MCF 10A (cell line): ENCODE measurements at regions of chr7 and their contacts with region 1.

Region 1: GRCh38 chr7:29189743-29190201 is 4.8 kb upstream of the CHN2 start:
- DNase-seq: peak; percentile 60
- H3K4me3 Mint-ChIP-seq: no peak overlapping the region
- H3K27ac Mint-ChIP-seq: no peak overlapping the region
- H3K4me1 Mint-ChIP-seq: no peaks in the 10 kb centered on the region
- H3K27me3 Mint-ChIP-seq: no peaks in the 10 kb centered on the region
- CTCF ChIP-seq: peak; percentile 87

Region 2: DNA sequence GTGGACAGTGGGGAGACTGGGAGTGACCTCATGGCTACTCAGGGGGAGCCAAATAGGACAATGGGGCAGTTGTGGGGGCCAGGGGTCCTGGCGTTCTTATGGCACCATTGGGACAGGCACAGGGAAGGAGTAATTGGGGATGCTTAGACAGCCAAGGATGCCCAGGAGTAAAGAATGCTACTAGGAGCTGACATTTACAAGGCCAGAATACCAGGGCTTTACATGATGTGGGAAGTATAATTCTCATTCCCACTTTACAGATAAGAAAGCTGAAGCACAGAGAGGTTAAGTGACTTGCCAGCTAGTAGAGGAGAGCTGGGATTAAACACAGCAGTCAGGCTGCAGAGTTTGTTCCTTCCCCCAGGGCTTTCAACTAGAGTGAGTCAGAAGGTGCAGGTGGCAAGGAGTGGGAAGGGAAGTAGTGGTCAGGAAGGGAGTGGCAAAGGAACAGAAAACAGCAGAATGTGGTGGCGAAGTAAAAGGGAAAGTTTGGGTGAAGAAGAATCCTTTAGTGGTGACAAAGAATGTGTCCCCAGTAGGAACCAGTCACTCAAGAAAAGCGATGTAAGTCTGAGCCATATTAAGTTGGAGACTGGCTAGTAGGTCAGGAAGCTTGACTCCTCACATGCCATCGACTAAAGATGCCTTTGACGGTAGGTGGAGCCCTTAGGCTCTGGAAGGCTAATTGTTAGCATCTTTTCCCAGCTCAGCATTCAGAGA is 76.2 kb before region 1 on chr7:
- CTCF ChIA-PET with region 1: interaction called, 19 read pairs
- POLR2A ChIA-PET with region 1: interaction called, 7 read pairs
- intact Hi-C with region 1: loop called (anchors 5 kb)
- DNase-seq: peak; percentile 82
- H3K4me3 Mint-ChIP-seq: peak overlapping the region; percentile 68
- H3K27ac Mint-ChIP-seq: peak overlapping the region; percentile 84
- H3K4me1 Mint-ChIP-seq: peaks cover 51% of the 10 kb centered on the region
- H3K27me3 Mint-ChIP-seq: no peaks in the 10 kb centered on the region
- CTCF ChIP-seq: peak; percentile 40

Region 3: DNA sequence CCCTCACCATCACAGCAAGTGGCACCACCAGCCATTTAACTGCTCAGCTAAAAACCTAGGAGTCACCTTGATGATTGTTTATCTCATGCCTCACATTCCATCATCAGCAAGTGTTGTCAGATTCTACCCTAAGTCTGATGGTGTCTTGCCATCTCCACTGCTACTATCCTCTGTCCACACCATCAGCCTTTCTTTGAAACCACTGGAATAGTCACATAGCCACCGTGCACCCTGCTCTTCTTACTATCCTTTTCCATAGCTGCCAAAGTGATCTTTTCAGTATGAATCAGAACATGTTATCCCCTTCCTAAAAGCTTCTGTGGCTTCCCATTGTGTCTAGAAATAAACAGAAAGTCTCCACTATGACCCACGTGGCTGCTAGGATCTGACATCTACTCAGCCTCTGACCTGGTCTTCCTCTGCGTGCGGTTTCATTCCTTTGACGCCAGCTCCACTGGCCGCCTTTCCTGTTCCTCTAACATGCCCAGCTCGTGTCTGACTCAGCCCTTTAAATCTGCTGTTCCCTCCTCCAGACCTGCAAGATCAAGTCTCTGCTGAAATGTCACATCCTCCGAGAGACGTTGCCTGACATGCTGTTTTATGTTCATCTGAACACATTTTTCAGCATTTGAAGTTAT is 11.7 kb before region 1 on chr7:
- CTCF ChIA-PET with region 1: interaction called, 24 read pairs
- POLR2A ChIA-PET with region 1: interaction called, 3 read pairs
- intact Hi-C with region 1: no loop called
- DNase-seq: no peak
- H3K4me3 Mint-ChIP-seq: no peak overlapping the region
- H3K27ac Mint-ChIP-seq: peak overlapping the region; percentile 5
- H3K4me1 Mint-ChIP-seq: peaks cover 7% of the 10 kb centered on the region
- H3K27me3 Mint-ChIP-seq: no peaks in the 10 kb centered on the region
- CTCF ChIP-seq: no peak

Region 4: GRCh38 chr7:29285444-29285793 is 95.6 kb after region 1 on chr7:
- CTCF ChIA-PET with region 1: interaction called, 18 read pairs
- POLR2A ChIA-PET with region 1: interaction called, 7 read pairs
- intact Hi-C with region 1: no loop called
- DNase-seq: peak; percentile 93
- H3K4me3 Mint-ChIP-seq: peak overlapping the region; percentile 51
- H3K27ac Mint-ChIP-seq: peak overlapping the region; percentile 91
- H3K4me1 Mint-ChIP-seq: peaks cover 58% of the 10 kb centered on the region
- H3K27me3 Mint-ChIP-seq: no peaks in the 10 kb centered on the region
- CTCF ChIP-seq: no peak

Region 5: DNA sequence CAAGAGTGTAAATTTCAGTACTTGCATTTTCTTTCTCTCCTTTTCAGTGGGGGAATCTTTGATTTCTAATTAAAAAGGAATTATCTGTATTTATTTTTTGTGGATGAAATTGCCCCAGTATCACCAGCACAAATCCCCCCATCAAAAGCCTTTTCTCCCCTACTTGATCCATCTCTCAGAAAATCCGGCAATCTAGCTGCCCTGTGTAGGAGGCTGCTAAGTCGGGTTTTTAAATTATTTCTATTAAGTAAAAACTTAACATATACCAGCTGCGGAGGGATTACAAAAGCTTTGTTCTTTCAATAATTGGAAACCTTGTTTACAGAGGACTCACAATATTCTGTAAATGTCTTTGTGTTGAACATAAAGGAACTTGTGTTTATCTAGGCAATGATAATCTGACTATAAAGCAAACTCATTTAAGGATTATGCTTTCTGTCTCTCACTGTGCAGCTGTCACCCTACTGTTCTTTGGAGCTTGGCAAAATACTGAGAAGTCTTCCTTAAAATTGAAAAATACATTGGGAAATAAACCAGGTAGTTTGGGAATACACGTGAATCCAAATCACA is 196.5 kb after region 1 on chr7:
- CTCF ChIA-PET with region 1: interaction called, 10 read pairs
- POLR2A ChIA-PET with region 1: no interaction called
- intact Hi-C with region 1: no loop called
- DNase-seq: no peak
- H3K4me3 Mint-ChIP-seq: no peak overlapping the region
- H3K27ac Mint-ChIP-seq: no peak overlapping the region
- H3K4me1 Mint-ChIP-seq: peaks cover 7% of the 10 kb centered on the region
- H3K27me3 Mint-ChIP-seq: no peaks in the 10 kb centered on the region
- CTCF ChIP-seq: no peak